Activated naive CD4-positive, alpha-beta T cell treated with anti-CD3 and anti-CD28 coated beads for 36 hours (primary cell): ENCODE measurements at regions of chr2 and their contacts with region 1.

Region 1: GRCh38 chr2:191566344-191566743 is 111.6 kb upstream of the NABP1 start:
- DNase-seq: peak; percentile 83
- H3K4me3 Mint-ChIP-seq: no peak overlapping the region
- H3K27ac Mint-ChIP-seq: no peak overlapping the region
- H3K4me1 Mint-ChIP-seq: peaks cover 20% of the 10 kb centered on the region
- H3K27me3 Mint-ChIP-seq: peaks cover 11% of the 10 kb centered on the region

Region 2: DNA sequence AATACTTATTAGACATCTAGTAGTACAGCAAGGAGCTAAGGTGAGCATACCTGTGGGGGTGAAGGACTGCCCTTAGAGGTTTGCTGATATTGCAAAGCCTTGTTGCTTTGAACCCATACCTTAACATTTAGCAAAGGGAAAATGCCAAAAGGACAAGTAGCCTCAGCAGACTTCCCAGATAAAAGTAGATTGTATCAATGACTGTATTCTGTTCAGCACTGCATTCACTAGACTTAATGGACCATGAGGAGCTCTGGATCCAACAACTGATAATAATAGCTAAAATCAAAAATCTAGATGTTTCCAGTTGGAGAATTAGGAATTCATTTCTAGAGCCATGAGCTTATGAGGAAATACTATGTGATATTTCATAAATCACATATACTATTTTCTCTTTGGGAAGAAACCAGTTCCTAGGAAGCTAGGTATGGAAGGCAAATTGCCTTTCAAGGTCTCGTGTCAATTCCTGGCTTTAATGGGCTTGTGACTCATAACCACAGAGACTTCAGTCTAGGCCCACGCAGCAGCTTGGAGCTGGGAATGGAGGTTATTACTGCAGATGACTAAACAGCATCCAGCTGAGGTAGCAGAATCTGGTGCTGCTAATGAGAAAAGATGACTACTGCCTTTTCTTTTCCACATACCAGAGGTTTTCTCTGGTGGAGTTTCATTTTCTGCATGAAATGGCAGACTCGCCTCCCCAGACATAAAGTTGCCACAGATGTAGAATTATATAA is 79.6 kb before region 1 on chr2:
- CTCF ChIA-PET with region 1: no interaction called
- intact Hi-C with region 1: no loop called
- DNase-seq: no peak
- H3K4me3 Mint-ChIP-seq: no peak overlapping the region
- H3K27ac Mint-ChIP-seq: no peak overlapping the region
- H3K4me1 Mint-ChIP-seq: no peaks in the 10 kb centered on the region
- H3K27me3 Mint-ChIP-seq: peaks cover 3% of the 10 kb centered on the region

Region 3: GRCh38 chr2:191617575-191617974 is 51.2 kb after region 1 on chr2:
- CTCF ChIA-PET with region 1: interaction called, 9 read pairs
- intact Hi-C with region 1: loop called (anchors 1 kb)
- DNase-seq: peak; percentile 79
- H3K4me3 Mint-ChIP-seq: no peak overlapping the region
- H3K27ac Mint-ChIP-seq: peak overlapping the region; percentile 97
- H3K4me1 Mint-ChIP-seq: peaks cover 68% of the 10 kb centered on the region
- H3K27me3 Mint-ChIP-seq: no peaks in the 10 kb centered on the region

Region 4: GRCh38 chr2:191691016-191691735 is 124.8 kb after region 1 on chr2:
- CTCF ChIA-PET with region 1: interaction called, 18 read pairs
- intact Hi-C with region 1: loop called (anchors 1 kb)
- DNase-seq: peak; percentile 73
- H3K4me3 Mint-ChIP-seq: no peak overlapping the region
- H3K27ac Mint-ChIP-seq: peak overlapping the region; percentile 72
- H3K4me1 Mint-ChIP-seq: peaks cover 66% of the 10 kb centered on the region
- H3K27me3 Mint-ChIP-seq: no peaks in the 10 kb centered on the region

Region 5: GRCh38 chr2:191758518-191759507 is 192.5 kb after region 1 on chr2:
- CTCF ChIA-PET with region 1: interaction called, 12 read pairs
- intact Hi-C with region 1: loop called (anchors 1 kb)
- DNase-seq: peak; percentile 68
- H3K4me3 Mint-ChIP-seq: no peak overlapping the region
- H3K27ac Mint-ChIP-seq: no peak overlapping the region
- H3K4me1 Mint-ChIP-seq: peaks cover 3% of the 10 kb centered on the region
- H3K27me3 Mint-ChIP-seq: peaks cover 9% of the 10 kb centered on the region

Region 6: DNA sequence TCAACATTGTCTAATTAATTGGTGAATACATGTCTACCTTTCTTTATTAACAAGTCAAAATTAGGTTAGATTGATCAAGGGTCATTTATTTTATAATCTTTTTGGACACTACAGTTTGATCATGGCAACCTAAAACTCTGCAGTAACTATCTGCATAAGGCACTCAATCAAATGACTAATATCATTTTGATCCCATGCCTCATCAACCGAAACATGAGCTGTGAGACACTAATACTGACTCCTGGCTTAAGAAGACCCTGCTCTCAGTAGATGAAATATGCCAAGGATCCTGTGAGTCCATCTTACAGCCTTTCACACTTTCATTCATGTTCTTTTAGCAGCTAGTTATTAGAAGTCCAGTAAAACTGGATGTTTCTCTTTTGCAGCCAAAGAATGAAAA is 449.9 kb after region 1 on chr2:
- CTCF ChIA-PET with region 1: no interaction called
- intact Hi-C with region 1: loop called (anchors 10 kb)
- DNase-seq: no peak
- H3K4me3 Mint-ChIP-seq: no peak overlapping the region
- H3K27ac Mint-ChIP-seq: no peak overlapping the region
- H3K4me1 Mint-ChIP-seq: no peaks in the 10 kb centered on the region
- H3K27me3 Mint-ChIP-seq: no peaks in the 10 kb centered on the region